Endothelial cell of umbilical vein (primary cell): ENCODE measurements at regions of chr12 and their contacts with region 1.

Region 1: GRCh38 chr12:71685914-71686665 is at the start of gene TMEM19:
- DNase-seq: peak; percentile 93
- H3K4me3 ChIP-seq: peak within 1 kb of the TSS; percentile 76 to 98 (median 91)
- H3K27ac ChIP-seq: peak within 1 kb of the TSS; percentile 32
- H3K4me1 ChIP-seq: peaks cover 4% of the 10 kb centered on the region
- H3K27me3 ChIP-seq: no peaks in the 10 kb centered on the region
- CTCF ChIP-seq: peak in 1 of 2 donors; percentile 26
- POLR2A ChIP-seq: peak; percentile 86
- total RNA-seq, gene TMEM19: 23.8 and 24.4 TPM in 2 replicates

Region 2: GRCh38 chr12:71057330-71057729 is 628.8 kb before region 1 on chr12:
- CTCF ChIA-PET with region 1: no interaction called
- POLR2A ChIA-PET with region 1: no interaction called
- dilution Hi-C with region 1: no loop called
- intact Hi-C with region 1: no loop called
- DNase-seq: no peak
- H3K4me3 ChIP-seq: no peak overlapping the region
- H3K27ac ChIP-seq: no peak overlapping the region
- H3K4me1 ChIP-seq: no peaks in the 10 kb centered on the region
- H3K27me3 ChIP-seq: no peaks in the 10 kb centered on the region
- CTCF ChIP-seq: no peak
- POLR2A ChIP-seq: no peak

Region 3: DNA sequence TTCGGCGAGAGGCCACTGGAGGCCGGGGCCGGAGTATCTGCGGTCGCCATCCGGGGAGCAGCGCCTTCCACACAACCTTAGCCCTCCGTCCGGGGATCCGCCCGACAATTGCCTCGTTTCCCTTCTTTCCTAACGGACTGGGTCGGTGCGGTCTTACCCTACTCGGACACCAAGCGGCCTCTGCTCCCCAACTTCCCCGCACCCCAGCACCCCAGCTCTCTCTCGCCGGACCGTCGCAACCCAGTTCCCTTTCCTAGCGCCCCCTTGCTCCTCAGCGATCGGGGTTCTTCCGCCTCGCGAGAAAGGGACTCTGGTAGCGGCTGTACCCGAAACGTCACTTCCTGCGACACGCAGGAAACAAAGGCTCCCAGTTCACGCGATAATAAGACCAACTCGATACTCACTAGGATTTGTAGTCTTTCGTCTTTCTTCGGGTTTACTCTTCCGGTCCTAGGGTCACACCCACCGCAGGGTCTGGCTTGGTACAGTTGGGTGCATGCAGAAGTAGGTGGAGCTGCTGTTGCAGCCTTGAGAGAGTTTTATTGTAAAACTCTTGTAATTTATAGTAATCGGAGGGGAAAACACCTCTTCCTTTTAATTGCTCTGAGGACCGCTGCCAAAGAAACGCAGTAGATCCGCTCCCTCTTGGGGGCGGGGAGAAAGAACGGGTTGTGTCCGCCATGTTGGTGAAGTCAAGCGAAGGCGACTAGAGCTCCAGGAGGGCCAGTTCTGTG is 22.4 kb before region 1 on chr12 and contains the start of gene ZFC3H1:
- CTCF ChIA-PET with region 1: interaction called, 36 read pairs
- POLR2A ChIA-PET with region 1: interaction called, 18 read pairs
- dilution Hi-C with region 1: no loop called
- intact Hi-C with region 1: loop called (anchors 1 kb)
- DNase-seq: peak; percentile 99
- H3K4me3 ChIP-seq: peak within 1 kb of the TSS; percentile 81 to 98 (median 92)
- H3K27ac ChIP-seq: peak within 1 kb of the TSS; percentile 56
- H3K4me1 ChIP-seq: peaks cover 17% of the 10 kb centered on the region
- H3K27me3 ChIP-seq: no peaks in the 10 kb centered on the region
- CTCF ChIP-seq: peak in 1 of 2 donors; percentile 31
- POLR2A ChIP-seq: peak; percentile 73
- total RNA-seq, gene ZFC3H1: 47.6 and 60.4 TPM in 2 replicates

Region 4: DNA sequence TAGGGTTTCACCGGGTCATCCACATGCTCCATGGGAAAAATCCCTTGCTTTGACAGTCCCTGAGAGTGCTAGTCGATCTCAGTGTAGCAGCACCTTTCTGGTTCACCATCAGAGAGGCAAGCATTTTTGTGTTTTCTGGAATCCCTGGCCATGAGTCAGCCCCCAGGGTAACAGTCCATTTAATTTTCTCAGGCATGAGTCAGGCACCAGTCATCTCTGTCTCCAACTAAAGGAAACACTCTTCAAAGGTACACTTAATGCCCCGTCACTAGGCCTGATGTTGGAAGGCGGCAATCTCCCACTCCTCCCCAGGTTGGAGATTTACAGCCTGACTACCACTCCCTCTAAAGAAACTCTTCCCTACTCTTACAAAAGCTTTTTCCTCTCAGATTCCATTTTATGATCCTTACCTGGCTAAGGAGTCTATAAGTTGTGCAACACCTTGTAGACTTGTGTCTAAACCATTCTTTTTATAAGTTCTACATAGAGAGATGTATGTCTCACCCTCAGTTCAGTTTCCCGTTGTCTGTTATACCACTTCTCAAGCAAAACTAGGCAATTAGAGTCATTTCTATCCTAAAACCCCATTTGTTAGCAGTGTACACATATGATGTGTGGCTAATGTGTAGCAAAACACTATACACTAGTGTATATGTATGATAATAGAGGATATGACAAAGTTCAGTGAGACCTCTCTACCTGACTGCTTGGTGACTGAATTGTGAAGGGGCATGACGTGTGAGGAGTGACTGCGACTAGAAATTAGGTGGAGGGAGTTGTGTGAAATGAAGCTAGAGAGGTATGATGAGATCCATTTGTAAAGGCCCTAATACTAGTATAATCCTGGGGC is 24.4 kb after region 1 on chr12:
- CTCF ChIA-PET with region 1: interaction called, 4 read pairs
- POLR2A ChIA-PET with region 1: no interaction called
- dilution Hi-C with region 1: no loop called
- intact Hi-C with region 1: loop called (anchors 2 kb)
- DNase-seq: peak; percentile 52
- H3K4me3 ChIP-seq: no peak overlapping the region
- H3K27ac ChIP-seq: peak overlapping the region; percentile 11
- H3K4me1 ChIP-seq: peaks cover 9% of the 10 kb centered on the region
- H3K27me3 ChIP-seq: peaks cover 0 to 2% of the 10 kb centered on the region in 2 experiments
- CTCF ChIP-seq: no peak
- POLR2A ChIP-seq: no peak

Region 5: GRCh38 chr12:71731751-71732712 is 45.9 kb after region 1 on chr12:
- CTCF ChIA-PET with region 1: no interaction called
- POLR2A ChIA-PET with region 1: no interaction called
- dilution Hi-C with region 1: no loop called
- intact Hi-C with region 1: no loop called
- DNase-seq: no peak
- H3K4me3 ChIP-seq: no peak overlapping the region
- H3K27ac ChIP-seq: no peak overlapping the region
- H3K4me1 ChIP-seq: no peaks in the 10 kb centered on the region
- H3K27me3 ChIP-seq: no peaks in the 10 kb centered on the region
- CTCF ChIP-seq: no peak
- POLR2A ChIP-seq: no peak

Region 6: DNA sequence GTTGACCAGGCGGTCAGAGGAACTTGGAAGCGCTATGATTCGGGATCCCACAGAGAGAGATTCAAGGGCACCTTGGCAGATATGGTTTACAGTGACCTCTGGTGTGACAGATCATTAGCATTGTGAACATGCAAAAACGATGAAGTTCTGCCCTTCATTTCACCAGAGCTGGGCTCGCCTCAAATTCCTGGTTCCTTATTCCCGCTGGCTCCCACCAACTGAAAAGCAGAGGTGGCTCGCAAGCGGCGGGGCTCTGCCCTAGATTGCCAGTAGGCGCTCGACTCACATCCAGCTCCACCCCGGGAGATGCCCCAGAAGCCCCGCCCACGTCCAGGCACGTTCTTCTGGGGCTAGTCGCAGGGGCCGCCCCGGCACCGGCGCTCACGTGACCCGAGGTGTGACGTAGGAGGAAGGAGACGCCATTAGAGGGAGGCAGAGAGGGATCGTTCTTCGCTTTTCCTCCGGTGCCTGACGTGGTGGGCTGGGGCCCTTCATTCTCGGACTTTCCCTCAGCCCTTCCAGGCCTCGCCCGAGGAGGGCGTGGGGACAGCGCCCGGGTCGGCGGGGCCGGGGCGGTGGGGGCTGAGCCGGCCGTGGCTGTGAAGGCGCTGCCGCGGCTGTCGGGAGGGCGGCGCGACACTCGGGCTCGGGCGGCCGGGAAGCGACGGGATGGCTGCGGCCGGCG is 68.5 kb after region 1 on chr12 and contains the start of gene RAB21:
- CTCF ChIA-PET with region 1: interaction called, 5 read pairs
- POLR2A ChIA-PET with region 1: no interaction called
- dilution Hi-C with region 1: no loop called
- intact Hi-C with region 1: loop called (anchors 2 kb)
- DNase-seq: peak; percentile 96
- H3K4me3 ChIP-seq: peak within 1 kb of the TSS; percentile 43 to 90 (median 67)
- H3K27ac ChIP-seq: peak within 1 kb of the TSS; percentile 73
- H3K4me1 ChIP-seq: peaks cover 16% of the 10 kb centered on the region
- H3K27me3 ChIP-seq: peaks cover 6 to 30% of the 10 kb centered on the region in 2 experiments
- CTCF ChIP-seq: peak in 1 of 2 donors; percentile 28
- POLR2A ChIP-seq: peak; percentile 88
- total RNA-seq, gene RAB21: 44.8 and 49.6 TPM in 2 replicates